ENCODE measurements at regions of chr2 and their contacts with region 1.

Region 1: DNA sequence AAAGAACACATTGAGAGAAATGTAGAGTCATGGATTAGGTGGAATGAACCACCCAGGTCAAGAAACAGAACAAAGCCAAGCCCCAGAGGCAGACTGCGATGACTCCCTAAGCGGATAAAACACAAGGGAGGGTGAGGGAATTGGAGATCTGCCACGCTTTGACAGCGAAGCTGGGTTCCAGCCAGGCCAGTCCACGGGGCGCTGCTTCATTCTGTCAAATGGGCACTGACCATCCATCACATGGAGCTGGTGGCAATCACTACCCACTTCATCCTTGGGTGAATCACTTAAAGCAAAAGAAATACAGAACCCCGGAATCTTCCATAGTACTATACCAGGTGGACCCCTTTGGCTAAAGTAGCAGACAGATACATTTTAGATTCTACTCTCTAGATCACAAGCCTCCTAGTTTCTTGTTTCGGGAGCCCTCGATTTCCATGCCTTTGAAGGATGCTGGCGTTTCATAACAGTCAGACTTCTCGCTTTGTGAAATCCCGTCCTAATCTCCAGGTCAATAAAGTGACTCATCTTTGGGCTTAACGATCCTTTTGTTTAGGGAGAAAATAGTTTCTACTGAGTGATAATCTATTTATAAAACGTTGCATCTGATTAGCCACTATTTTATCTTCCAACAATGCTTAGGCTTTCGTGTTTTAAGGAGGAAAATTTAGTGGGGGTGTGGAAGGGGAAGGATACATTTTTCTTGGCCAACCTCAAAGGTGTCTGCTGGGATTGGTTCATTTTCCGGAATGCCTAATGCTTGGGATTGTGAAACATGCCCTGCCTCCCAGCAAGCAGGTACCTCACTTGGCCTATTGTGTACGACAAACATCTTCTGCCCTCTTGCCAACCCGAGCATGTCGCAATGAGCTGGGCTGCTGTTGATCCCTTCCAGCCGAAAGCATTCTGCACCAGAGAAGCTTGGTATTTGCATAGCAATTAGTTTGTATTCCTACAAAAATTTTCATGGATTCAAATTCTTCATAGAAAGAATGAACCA is 44.1 kb upstream of the HDAC4 start:
- DNase-seq: peak in 9 of 10 donors; percentile 65 to 91 (median 75)
- H3K4me3 ChIP-seq: peak overlapping the region in 18 of 59 donors; percentile 0 to 42 (median 19)
- H3K27ac ChIP-seq: peak overlapping the region; percentile 67 to 100 (median 98)
- H3K27me3 ChIP-seq: no peaks in the 10 kb centered on the region
- CTCF ChIP-seq: peak in 2 of 56 donors; percentile 15 to 22

Region 2: GRCh38 chr2:239035361-239036078 is 409.4 kb before region 1 on chr2:
- intact Hi-C with region 1: loop called in 1 of 2 experiments (anchors 5 kb)
- DNase-seq: peak; percentile 47 to 82 (median 64)
- H3K4me3 ChIP-seq: peak overlapping the region in 2 of 59 donors; percentile 18
- H3K27ac ChIP-seq: peak overlapping the region in 3 of 59 donors; percentile 44 to 57 (median 46)
- H3K27me3 ChIP-seq: no peaks in the 10 kb centered on the region
- CTCF ChIP-seq: peak; percentile 61 to 99 (median 93)

Region 3: GRCh38 chr2:239129147-239129920 is 315.6 kb before region 1 on chr2:
- intact Hi-C with region 1: no loop called
- DNase-seq: no peak
- H3K4me3 ChIP-seq: no peak overlapping the region
- H3K27ac ChIP-seq: peak overlapping the region in 52 of 59 donors; percentile 11 to 98 (median 90)
- H3K27me3 ChIP-seq: no peaks in the 10 kb centered on the region
- CTCF ChIP-seq: no peak

Region 4: GRCh38 chr2:239401067-239401880 is 43.7 kb before region 1 on chr2:
- intact Hi-C with region 1: loop called (anchors 1 to 2 kb)
- DNase-seq: peak; percentile 99 to 100 (median 100)
- H3K4me3 ChIP-seq: peak overlapping the region; percentile 60 to 100 (median 85)
- H3K27ac ChIP-seq: peak overlapping the region; percentile 95 to 100 (median 100)
- H3K27me3 ChIP-seq: no peaks in the 10 kb centered on the region
- CTCF ChIP-seq: peak in 18 of 56 donors; percentile 2 to 43 (median 15)

Region 5: GRCh38 chr2:239735131-239735828 is 290.4 kb after region 1 on chr2:
- intact Hi-C with region 1: loop called (anchors 5 to 10 kb)
- DNase-seq: peak in 9 of 10 donors; percentile 72 to 89 (median 80)
- H3K4me3 ChIP-seq: peak overlapping the region in 30 of 59 donors; percentile 2 to 55 (median 26)
- H3K27ac ChIP-seq: peak overlapping the region in 22 of 59 donors; percentile 2 to 82 (median 42)
- H3K27me3 ChIP-seq: no peaks in the 10 kb centered on the region
- CTCF ChIP-seq: peak in 46 of 56 donors; percentile 8 to 67 (median 44)

Region 6: GRCh38 chr2:239927424-239927981 is 482.6 kb after region 1 on chr2:
- intact Hi-C with region 1: loop called in 1 of 2 experiments (anchors 5 kb)
- DNase-seq: peak; percentile 1 to 63 (median 44)
- H3K4me3 ChIP-seq: peak overlapping the region in 46 of 59 donors; percentile 8 to 64 (median 46)
- H3K27ac ChIP-seq: peak overlapping the region in 22 of 59 donors; percentile 24 to 93 (median 87)
- H3K27me3 ChIP-seq: no peaks in the 10 kb centered on the region
- CTCF ChIP-seq: peak in 1 of 56 donors; percentile 5